Sigmoid colon (tissue), 7 donors: ENCODE measurements at regions of chr16 and their contacts with region 1.

Region 1: DNA sequence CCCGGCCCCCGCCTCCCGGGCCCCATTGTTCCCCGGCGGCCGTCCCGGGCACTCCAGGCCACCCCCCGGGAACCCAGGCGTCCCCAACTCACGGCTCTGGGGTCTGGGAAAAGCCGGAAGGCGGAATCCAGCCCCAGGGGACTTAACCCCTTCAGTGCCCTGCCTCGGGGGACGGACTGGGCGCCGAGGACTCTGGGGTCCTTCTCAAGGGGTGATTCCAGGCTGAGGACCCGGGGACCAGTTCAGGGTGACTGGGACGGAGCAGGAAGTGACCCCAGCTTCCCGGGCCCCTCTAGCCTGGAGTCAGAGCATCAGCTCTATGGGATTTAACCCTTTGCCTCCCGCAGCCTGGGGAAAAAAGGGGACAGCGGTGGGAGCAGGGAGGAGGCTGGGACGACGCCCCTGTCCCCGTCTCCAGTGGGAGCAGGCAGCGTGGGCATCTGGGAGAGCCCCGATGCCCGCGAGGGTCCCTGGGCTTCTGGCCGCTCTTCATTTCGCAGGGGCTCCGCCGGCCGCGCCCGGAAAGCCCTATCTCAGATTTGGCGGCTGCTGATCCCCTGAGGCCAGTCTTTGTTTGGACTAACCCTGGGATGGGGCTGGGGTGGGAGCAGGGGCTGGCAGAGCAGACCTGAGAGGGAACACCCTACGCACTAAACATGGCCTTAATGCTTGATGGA is at the start of gene ZNF629:
- DNase-seq: peak; percentile 89
- H3K4me3 ChIP-seq: peak within 1 kb of the TSS; percentile 78 to 99 (median 90)
- H3K27ac ChIP-seq: peak within 1 kb of the TSS; percentile 89 to 96 (median 93)
- H3K4me1 ChIP-seq: peaks cover 3 to 29% (median 23%) of the 10 kb centered on the region in 4 donors
- H3K27me3 ChIP-seq: no peaks in the 10 kb centered on the region
- CTCF ChIP-seq: peak in 1 of 4 experiments; percentile 24
- EP300 ChIP-seq: no peak
- POLR2A ChIP-seq: no peak
- total RNA-seq, gene ZNF629: 8.4 to 12.1 (median 10.3) TPM

Region 2: DNA sequence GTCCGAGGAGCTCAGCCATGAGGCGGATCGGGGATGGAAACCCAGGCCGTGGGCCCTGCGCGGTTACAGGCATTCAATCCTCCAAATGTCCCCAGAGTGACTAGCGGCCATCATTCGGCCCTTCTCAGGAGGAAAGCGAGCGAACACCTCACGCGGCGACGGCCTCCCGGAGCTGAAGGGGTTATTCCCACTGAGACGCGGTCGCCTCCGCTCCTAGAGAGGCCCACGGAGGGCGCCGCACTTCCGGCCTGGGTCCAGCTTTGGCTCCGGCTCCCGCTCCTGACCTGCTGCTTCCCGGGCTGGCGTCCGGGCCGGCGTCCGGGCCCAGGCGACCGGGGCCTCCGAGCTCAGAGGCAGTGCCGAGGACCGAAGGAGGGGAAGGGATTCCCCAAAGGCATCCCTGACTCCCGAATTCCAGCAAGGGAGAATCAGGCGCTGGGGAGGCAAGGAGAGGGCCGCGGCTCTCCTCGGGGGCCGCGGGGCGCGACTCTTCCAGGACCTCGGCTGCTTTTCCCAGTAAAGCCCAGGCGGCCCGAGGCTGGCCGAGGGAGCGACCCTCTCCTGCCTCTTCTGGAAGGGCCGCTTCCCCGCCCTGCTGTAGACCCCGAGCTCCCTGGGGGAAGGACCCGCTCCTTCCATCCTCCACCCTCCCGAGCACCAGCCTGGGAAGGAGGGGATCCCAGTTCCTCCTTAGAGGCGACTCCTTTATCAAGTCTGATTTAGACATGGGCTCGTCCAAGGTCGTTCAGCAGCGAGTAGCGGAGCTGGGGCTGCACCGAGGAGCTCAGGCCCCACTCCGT is 18.5 kb after region 1 on chr16:
- intact Hi-C with region 1: loop called (anchors 1 kb)
- DNase-seq: peak; percentile 95
- H3K4me3 ChIP-seq: peak overlapping the region; percentile 67 to 89 (median 76)
- H3K27ac ChIP-seq: peak overlapping the region; percentile 91 to 96 (median 93)
- H3K4me1 ChIP-seq: peaks cover 0 to 22% (median 18%) of the 10 kb centered on the region in 4 donors
- H3K27me3 ChIP-seq: no peaks in the 10 kb centered on the region
- CTCF ChIP-seq: no peak
- EP300 ChIP-seq: peak in 1 of 4 donors; percentile 40
- POLR2A ChIP-seq: peak; percentile 95 to 97